Gastrocnemius medialis (tissue), 4 donors: ENCODE measurements at regions of chr11 and their contacts with region 1.

Region 1: GRCh38 chr11:12043959-12044819 is 35.8 kb upstream of the DKK3 start:
- DNase-seq: peak; percentile 77 to 95
- ATAC-seq: peak; percentile 80
- H3K4me3 ChIP-seq: peak overlapping the region in 2 of 4 donors; percentile 12 to 15
- H3K27ac ChIP-seq: peak overlapping the region; percentile 58 to 74 (median 68)
- H3K4me1 ChIP-seq: peaks cover 11% of the 10 kb centered on the region in 2 donors
- H3K27me3 ChIP-seq: no peaks in the 10 kb centered on the region
- CTCF ChIP-seq: peak; percentile 90 to 95 (median 92)
- POLR2A ChIP-seq: peak in 1 of 2 donors; percentile 9

Region 2: GRCh38 chr11:11028017-11028692 is 1016.0 kb before region 1 on chr11:
- in situ Hi-C with region 1: loop called in 2 of 4 experiments (anchors 25 kb)
- intact Hi-C with region 1: no loop called
- DNase-seq: peak; percentile 38 to 53
- ATAC-seq: peak; percentile 82 to 94
- H3K4me3 ChIP-seq: no peak overlapping the region
- H3K27ac ChIP-seq: no peak overlapping the region
- H3K4me1 ChIP-seq: no peaks in the 10 kb centered on the region
- H3K27me3 ChIP-seq: no peaks in the 10 kb centered on the region
- CTCF ChIP-seq: peak; percentile 65 to 85 (median 72)
- POLR2A ChIP-seq: no peak

Region 3: DNA sequence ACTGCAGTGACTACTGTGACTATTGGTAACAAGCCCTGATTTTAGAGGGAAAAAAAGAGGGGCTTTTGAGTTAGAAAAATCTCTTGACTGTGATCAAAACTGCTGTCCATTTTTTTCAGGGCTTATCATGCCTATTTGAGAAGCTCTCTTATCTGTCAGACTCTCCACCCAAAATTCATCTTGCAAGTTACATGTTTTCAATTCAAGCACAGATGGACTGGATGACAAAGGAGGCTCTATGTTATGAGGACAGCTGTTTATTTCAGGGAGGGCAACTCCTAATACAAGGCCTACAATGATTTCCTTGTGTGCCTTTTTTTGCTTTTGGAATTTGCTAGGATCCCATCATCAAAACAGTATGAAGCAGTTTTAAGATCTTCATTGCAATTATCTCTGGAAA is 237.6 kb before region 1 on chr11:
- in situ Hi-C with region 1: loop called in 2 of 4 experiments (anchors 10 kb)
- intact Hi-C with region 1: no loop called
- DNase-seq: no peak
- ATAC-seq: no peak
- H3K4me3 ChIP-seq: no peak overlapping the region
- H3K27ac ChIP-seq: no peak overlapping the region
- H3K4me1 ChIP-seq: no peaks in the 10 kb centered on the region
- H3K27me3 ChIP-seq: no peaks in the 10 kb centered on the region
- CTCF ChIP-seq: no peak
- POLR2A ChIP-seq: no peak

Region 4: GRCh38 chr11:11966826-11967668 is 77.1 kb before region 1 on chr11:
- in situ Hi-C with region 1: no loop called
- intact Hi-C with region 1: loop called (anchors 5 kb)
- DNase-seq: peak; percentile 31 to 67
- ATAC-seq: peak; percentile 45 to 76
- H3K4me3 ChIP-seq: no peak overlapping the region
- H3K27ac ChIP-seq: no peak overlapping the region
- H3K4me1 ChIP-seq: peaks cover 0 to 3% of the 10 kb centered on the region in 2 donors
- H3K27me3 ChIP-seq: no peaks in the 10 kb centered on the region
- CTCF ChIP-seq: peak; percentile 57 to 83 (median 60)
- POLR2A ChIP-seq: no peak

Region 5: DNA sequence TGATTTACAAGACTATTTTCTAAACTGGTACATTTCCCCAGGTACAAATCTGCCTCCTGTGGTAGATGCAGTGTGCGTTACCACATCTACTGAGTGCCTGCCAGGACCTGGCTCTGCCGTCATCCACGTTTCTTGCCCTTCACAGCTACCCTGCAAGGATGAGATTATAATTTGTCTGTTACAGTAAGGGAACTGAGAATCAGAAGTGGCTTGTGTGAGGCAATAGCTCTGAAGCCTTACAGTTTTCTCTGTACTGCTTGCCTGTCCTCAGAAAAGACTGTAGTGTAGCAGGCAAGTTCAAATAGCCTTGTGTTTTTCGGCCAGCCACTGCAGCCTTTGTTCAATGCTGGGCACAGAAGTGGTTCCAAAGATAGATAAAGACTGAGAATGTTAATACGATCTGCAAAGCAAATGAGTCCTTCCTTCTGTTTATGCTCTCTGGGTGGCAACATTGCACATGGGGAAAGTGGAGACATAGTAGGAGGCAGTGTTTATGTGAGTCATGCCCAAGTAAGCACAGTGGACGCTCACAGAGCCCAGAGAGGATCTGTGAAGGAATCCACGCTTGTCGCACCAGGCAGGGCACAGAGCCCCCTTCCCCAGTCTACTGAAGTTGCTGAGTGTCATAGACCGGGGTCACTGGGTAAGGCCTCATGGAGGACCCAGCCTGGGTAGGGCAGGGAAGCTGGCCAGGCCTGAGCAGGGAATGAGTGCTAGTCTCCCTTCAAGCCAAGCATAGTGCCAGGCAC is 115.3 kb after region 1 on chr11:
- in situ Hi-C with region 1: no loop called
- intact Hi-C with region 1: loop called (anchors 1 kb)
- DNase-seq: peak; percentile 38 to 49
- ATAC-seq: peak; percentile 90 to 93
- H3K4me3 ChIP-seq: no peak overlapping the region
- H3K27ac ChIP-seq: peak overlapping the region; percentile 62 to 93 (median 74)
- H3K4me1 ChIP-seq: peaks cover 11 to 30% of the 10 kb centered on the region in 2 donors
- H3K27me3 ChIP-seq: no peaks in the 10 kb centered on the region
- CTCF ChIP-seq: no peak
- POLR2A ChIP-seq: peak; percentile 17 to 68

Region 6: DNA sequence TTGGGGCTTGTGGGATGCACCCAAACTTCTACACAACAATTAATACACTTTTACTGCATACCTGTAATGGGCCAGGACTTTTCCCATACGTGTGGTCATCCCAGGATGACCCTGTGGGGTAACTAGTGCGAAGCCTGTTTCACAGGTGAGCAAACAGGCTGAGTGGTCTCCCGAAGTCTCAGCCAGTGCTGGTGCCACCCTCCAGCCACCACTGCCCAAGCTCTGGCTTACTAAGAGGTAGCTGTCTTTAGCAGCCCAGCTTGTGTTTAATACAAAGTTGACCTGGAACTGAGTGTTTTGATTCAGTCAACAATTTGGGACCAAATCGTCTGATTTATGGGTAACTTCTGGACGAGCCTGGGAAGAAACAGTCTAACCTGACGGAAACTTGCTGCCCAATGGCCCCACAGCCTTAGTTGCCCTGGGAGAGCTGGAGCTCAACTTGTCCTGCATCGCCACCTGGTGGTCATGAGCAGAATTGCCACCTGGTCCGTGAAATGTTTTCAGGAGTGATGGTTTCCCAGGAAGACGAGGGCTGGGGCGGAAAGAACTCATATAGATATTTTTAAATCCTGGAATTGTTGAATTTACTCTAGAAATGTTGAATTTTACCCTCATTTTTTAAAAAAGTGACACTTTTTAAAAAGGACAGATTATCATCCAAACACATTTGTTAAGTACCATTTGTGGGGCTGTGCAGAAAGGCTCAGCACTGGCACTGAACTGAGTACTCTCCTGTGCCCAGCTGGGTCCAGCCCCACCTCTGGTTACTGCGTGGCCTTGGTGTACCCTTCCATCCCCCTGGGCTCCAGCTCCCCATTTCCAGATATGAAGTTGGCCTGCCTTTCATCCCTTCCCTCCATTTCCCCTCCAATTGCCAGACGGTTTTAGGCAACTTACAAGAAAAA is 237.6 kb after region 1 on chr11:
- in situ Hi-C with region 1: loop called (anchors 5 kb)
- intact Hi-C with region 1: loop called (anchors 1 kb)
- DNase-seq: peak; percentile 61 to 74
- ATAC-seq: peak; percentile 73 to 88
- H3K4me3 ChIP-seq: no peak overlapping the region
- H3K27ac ChIP-seq: no peak overlapping the region
- H3K4me1 ChIP-seq: peaks cover 3 to 4% of the 10 kb centered on the region in 2 donors
- H3K27me3 ChIP-seq: no peaks in the 10 kb centered on the region
- CTCF ChIP-seq: peak; percentile 95 to 97 (median 97)
- POLR2A ChIP-seq: no peak